ENCODE measurements at regions of chr16 and their contacts with region 1.

Region 1: GRCh38 chr16:19215705-19216104 is 47.7 kb downstream of the SYT17 start:
- DNase-seq: no peak

Region 2: DNA sequence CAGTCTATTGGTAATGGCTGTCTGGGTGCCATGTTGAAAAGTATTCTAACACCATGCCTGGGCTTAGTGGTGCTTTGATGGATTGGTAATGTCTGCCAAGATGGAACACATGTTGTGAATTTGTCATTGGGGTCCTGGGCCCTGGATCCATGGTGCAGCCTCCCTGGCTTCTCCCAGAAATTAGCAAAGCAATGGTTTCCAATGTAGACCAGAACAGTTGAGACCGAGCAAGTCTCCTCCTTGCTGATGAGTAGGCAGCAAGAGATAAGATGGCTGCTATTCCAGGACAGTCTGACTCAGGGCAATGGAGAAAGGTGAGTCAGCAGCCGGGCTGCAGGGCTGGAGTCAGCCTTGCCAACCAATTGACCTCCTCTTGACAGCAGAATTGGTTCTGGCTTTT is 827.1 kb after region 1 on chr16:
- CTCF ChIA-PET with region 1: interaction called, 11 read pairs
- POLR2A ChIA-PET with region 1: no interaction called
- DNase-seq: no peak

Measured in HEK293T (cell line).